ENCODE measurements at regions of chr17 and their contacts with region 1.

Region 1: DNA sequence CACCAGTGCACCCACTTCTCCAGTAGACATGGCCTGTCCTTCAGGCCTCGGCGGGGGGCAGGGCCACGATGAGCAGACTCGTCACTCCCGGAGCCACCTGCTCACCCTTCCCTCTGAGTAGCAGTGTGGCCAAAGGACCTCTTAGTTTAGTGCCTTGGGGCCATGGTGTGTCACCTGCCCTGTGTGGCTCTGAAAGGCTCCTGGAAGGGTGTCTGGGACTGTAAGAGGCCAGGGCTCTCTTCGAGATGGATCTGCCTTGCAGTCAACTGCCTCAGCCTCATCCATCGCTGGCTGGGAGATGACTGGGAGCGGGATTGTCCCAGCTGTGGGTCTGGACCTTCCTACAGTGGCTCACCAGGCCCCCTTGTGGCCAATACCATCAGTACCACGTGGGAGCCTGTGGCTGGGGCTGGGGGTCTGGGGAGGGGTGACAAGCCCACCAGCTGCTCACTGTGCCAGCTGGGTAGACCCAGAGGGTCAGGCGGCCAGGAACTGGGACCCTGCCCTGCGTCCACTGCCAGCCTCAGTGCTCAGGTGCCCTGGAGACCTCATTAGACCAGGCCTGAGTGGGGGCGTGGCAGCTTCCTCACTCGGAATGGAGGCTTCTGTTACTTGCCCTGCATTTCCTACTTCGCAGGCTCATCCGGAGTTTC is 133.4 kb downstream of the OR1D5 start:
- DNase-seq: peak; percentile 47 to 89
- H3K4me3 ChIP-seq: no peak overlapping the region
- H3K27ac ChIP-seq: no peak overlapping the region
- H3K4me1 ChIP-seq: peaks cover 8 to 25% (median 15%) of the 10 kb centered on the region in 4 experiments
- H3K27me3 ChIP-seq: no peaks in the 10 kb centered on the region
- CTCF ChIP-seq: peak; percentile 82 to 87 (median 82)
- EP300 ChIP-seq: peak in 1 of 2 experiments; percentile 25; a peak in 1 of 3 replicates
- POLR2A ChIP-seq: no peak
- RAD21 ChIP-seq: peak; percentile 87 to 91

Region 2: GRCh38 chr17:2736956-2737355 is 193.1 kb before region 1 on chr17:
- CTCF ChIA-PET with region 1: no interaction called
- POLR2A ChIA-PET with region 1: no interaction called
- DNase-seq: no peak
- H3K4me3 ChIP-seq: no peak overlapping the region
- H3K27ac ChIP-seq: no peak overlapping the region
- H3K4me1 ChIP-seq: no peaks in the 10 kb centered on the region
- H3K27me3 ChIP-seq: no peaks in the 10 kb centered on the region
- CTCF ChIP-seq: no peak
- EP300 ChIP-seq: no peak
- POLR2A ChIP-seq: no peak
- RAD21 ChIP-seq: no peak

Region 3: DNA sequence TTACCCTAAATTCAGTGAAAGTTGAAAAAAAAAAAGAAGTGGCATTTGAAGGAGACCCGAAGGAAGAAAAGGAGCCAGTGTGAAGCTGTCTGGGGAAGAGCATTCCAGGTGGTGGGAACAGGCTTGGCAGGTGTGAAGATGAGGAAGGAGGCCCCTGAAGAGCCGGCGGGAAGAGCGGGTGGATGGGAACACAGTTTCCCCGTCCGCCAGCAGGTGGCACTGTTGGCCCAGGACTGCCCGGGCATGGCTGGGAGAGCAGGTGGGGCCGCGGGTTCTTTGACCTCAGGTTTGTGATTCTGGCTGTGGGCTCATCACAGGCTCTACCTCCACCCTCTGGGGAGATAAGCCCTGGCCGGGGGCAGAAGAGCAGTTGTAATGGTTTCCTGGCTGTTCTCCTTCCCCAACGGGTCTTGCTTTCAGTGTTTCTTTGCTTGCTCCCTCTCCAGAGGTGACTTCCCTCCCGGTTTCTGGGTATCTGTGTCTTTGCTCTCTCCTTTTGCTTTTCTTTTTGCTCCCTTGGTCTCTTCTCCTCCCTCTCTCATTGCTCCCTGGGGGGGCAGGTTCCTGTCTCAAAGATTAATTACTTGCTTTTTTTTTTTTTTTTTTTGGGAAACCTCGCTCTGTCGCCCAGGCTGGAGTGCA is 101.5 kb before region 1 on chr17:
- CTCF ChIA-PET with region 1: interaction called, 10 read pairs
- POLR2A ChIA-PET with region 1: interaction called, 4 read pairs
- DNase-seq: peak; percentile 81 to 99
- H3K4me3 ChIP-seq: no peak overlapping the region
- H3K27ac ChIP-seq: no peak overlapping the region
- H3K4me1 ChIP-seq: peaks cover 0 to 3% (median 1%) of the 10 kb centered on the region in 4 experiments; a peak in 5 of 7 replicates
- H3K27me3 ChIP-seq: no peaks in the 10 kb centered on the region
- CTCF ChIP-seq: peak; percentile 96 to 98 (median 97)
- EP300 ChIP-seq: peak in 1 of 2 experiments; percentile 60; a peak in 1 of 3 replicates
- POLR2A ChIP-seq: no peak
- RAD21 ChIP-seq: peak; percentile 97 to 98

Region 4: GRCh38 chr17:2862197-2862596 is 67.8 kb before region 1 on chr17:
- CTCF ChIA-PET with region 1: interaction called, 17 read pairs
- POLR2A ChIA-PET with region 1: no interaction called
- DNase-seq: no peak
- H3K4me3 ChIP-seq: no peak overlapping the region
- H3K27ac ChIP-seq: no peak overlapping the region
- H3K4me1 ChIP-seq: peaks cover 0 to 18% (median 6%) of the 10 kb centered on the region in 4 experiments
- H3K27me3 ChIP-seq: no peaks in the 10 kb centered on the region
- CTCF ChIP-seq: no peak
- EP300 ChIP-seq: no peak
- POLR2A ChIP-seq: no peak
- RAD21 ChIP-seq: no peak

Region 5: GRCh38 chr17:2892305-2892971 is 37.6 kb before region 1 on chr17:
- CTCF ChIA-PET with region 1: interaction called, 12 read pairs
- POLR2A ChIA-PET with region 1: no interaction called
- DNase-seq: no peak
- H3K4me3 ChIP-seq: no peak overlapping the region
- H3K27ac ChIP-seq: no peak overlapping the region
- H3K4me1 ChIP-seq: peaks cover 0 to 3% (median 2%) of the 10 kb centered on the region in 4 experiments; a peak in 4 of 7 replicates
- H3K27me3 ChIP-seq: no peaks in the 10 kb centered on the region
- CTCF ChIP-seq: no peak
- EP300 ChIP-seq: no peak
- POLR2A ChIP-seq: no peak
- RAD21 ChIP-seq: no peak

Region 6: DNA sequence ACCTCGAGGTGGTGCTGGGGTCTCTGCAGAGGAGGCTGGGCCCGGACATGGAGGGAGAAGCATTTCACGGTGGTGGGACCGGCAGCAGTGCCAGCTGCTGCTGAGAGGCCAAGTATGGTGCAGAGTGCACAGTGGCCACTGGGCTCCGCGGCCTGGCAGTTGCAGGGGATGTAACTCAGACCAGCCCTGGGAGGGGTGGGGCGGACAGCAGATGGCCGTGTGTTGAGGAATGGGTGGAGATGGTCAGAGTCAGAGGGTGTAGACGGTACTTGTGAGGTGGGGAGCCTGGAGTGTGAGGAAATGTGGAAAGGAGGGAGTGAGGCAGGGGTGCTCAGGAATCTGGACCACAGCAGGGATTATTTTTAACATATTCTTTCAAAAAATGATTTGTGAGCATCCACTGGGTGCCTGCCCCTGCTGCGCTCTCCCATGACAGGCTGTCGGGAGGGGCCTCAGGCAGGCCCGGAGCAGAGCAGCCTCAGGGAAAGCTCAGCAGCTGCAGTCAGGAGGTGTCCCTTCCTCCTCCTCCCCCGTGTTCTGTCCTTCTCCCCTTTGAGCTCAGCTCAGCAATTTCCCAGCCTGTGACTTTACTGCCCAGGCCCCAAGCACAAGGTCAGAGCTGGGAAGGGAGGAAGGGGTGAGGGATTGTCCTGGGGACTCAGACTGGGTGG is 20.7 kb before region 1 on chr17:
- CTCF ChIA-PET with region 1: interaction called, 23 read pairs
- POLR2A ChIA-PET with region 1: interaction called, 4 read pairs
- DNase-seq: no peak
- H3K4me3 ChIP-seq: no peak overlapping the region
- H3K27ac ChIP-seq: no peak overlapping the region
- H3K4me1 ChIP-seq: peaks cover 0 to 6% (median under 1%) of the 10 kb centered on the region in 4 experiments; a peak in 3 of 7 replicates
- H3K27me3 ChIP-seq: no peaks in the 10 kb centered on the region
- CTCF ChIP-seq: no peak
- EP300 ChIP-seq: no peak
- POLR2A ChIP-seq: no peak
- RAD21 ChIP-seq: no peak

Region 7: GRCh38 chr17:3012926-3013581 is 83.0 kb after region 1 on chr17:
- CTCF ChIA-PET with region 1: interaction called, 15 read pairs
- POLR2A ChIA-PET with region 1: no interaction called
- DNase-seq: peak; percentile 62 to 82
- H3K4me3 ChIP-seq: no peak overlapping the region
- H3K27ac ChIP-seq: no peak overlapping the region
- H3K4me1 ChIP-seq: no peaks in the 10 kb centered on the region
- H3K27me3 ChIP-seq: no peaks in the 10 kb centered on the region
- CTCF ChIP-seq: peak; percentile 88 to 98 (median 94)
- EP300 ChIP-seq: no peak
- POLR2A ChIP-seq: no peak
- RAD21 ChIP-seq: peak; percentile 97 to 98